Activated CD4-positive, alpha-beta memory T cell treated with anti-CD3 and anti-CD28 coated beads for 36 hours (primary cell): ENCODE measurements at regions of chr17 and their contacts with region 1.

Region 1: DNA sequence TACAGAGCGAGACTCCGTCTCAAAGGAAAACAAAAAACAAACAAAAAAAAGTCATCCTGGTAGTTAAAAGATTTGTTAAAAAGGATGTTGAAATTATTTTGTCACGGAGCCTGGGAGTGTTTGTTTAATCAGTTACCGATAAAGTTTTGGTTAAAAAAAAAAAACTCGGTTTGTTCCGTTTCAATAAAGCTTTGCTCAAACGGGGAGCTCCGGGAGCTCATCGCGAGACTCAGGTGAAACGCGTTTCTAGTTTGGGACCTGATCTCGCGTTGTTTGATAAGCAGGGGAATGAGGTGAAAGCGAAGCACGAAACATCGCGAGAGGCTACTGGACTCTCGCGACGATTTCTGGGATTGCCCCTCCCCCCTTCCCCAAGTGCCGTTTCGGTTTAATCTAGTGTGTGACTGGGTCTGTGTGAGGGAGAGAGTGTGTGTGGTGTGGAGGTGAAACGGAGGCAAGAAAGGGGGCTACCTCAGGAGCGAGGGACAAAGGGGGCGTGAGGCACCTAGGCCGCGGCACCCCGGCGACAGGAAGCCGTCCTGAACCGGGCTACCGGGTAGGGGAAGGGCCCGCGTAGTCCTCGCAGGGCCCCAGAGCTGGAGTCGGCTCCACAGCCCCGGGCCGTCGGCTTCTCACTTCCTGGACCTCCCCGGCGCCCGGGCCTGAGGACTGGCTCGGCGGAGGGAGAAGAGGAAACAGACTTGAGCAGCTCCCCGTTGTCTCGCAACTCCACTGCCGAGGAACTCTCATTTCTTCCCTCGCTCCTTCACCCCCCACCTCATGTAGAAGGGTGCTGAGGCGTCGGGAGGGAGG is at the start of gene CDK12:
- DNase-seq: peak; percentile 98
- H3K4me3 Mint-ChIP-seq: peak within 1 kb of the TSS; percentile 88
- H3K27ac Mint-ChIP-seq: peak within 1 kb of the TSS; percentile 95
- H3K4me1 Mint-ChIP-seq: peaks cover 22% of the 10 kb centered on the region
- H3K27me3 Mint-ChIP-seq: no peaks in the 10 kb centered on the region
- total RNA-seq, gene CDK12: 55.8 to 57.4 TPM

Region 2: GRCh38 chr17:39318636-39319035 is 142.7 kb before region 1 on chr17:
- CTCF ChIA-PET with region 1: no interaction called
- POLR2A ChIA-PET with region 1: no interaction called
- intact Hi-C with region 1: no loop called
- DNase-seq: no peak
- H3K4me3 Mint-ChIP-seq: no peak overlapping the region
- H3K27ac Mint-ChIP-seq: no peak overlapping the region
- H3K4me1 Mint-ChIP-seq: no peaks in the 10 kb centered on the region
- H3K27me3 Mint-ChIP-seq: no peaks in the 10 kb centered on the region

Region 3: DNA sequence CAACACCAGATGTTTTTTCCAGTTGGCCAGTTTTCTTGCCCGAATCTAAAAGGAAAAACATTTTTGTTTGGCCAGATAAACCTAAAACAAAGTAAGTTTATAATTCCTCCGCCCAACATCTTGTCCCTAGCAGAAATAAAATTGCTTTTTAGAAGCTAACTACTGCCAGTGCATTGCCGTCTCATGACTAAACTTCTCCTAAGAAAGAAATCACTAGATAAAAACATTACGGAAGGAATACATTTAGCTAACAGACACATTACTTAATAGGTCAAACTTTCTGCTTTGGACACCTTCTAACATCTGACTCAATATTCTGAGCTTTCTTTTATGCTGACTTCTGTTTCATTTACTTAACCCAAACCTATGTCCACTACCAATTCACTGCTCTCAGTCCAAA is 96.1 kb before region 1 on chr17:
- CTCF ChIA-PET with region 1: no interaction called
- POLR2A ChIA-PET with region 1: no interaction called
- intact Hi-C with region 1: no loop called
- DNase-seq: no peak
- H3K4me3 Mint-ChIP-seq: no peak overlapping the region
- H3K27ac Mint-ChIP-seq: no peak overlapping the region
- H3K4me1 Mint-ChIP-seq: peaks cover 4% of the 10 kb centered on the region
- H3K27me3 Mint-ChIP-seq: no peaks in the 10 kb centered on the region

Region 4: GRCh38 chr17:39450847-39451581 is 10.3 kb before region 1 on chr17 and contains the start of gene MED1:
- CTCF ChIA-PET with region 1: interaction called, 14 read pairs
- POLR2A ChIA-PET with region 1: interaction called, 85 read pairs
- intact Hi-C with region 1: loop called (anchors 1 kb)
- DNase-seq: peak; percentile 96
- H3K4me3 Mint-ChIP-seq: peak within 1 kb of the TSS; percentile 96
- H3K27ac Mint-ChIP-seq: peak within 1 kb of the TSS; percentile 96
- H3K4me1 Mint-ChIP-seq: peaks cover 26% of the 10 kb centered on the region
- H3K27me3 Mint-ChIP-seq: no peaks in the 10 kb centered on the region
- total RNA-seq, gene MED1: 58.9 to 59.7 TPM

Region 5: GRCh38 chr17:39927101-39927928 is 466.0 kb after region 1 on chr17 and contains the starts of genes LRRC3C and ORMDL3:
- CTCF ChIA-PET with region 1: no interaction called
- POLR2A ChIA-PET with region 1: no interaction called
- intact Hi-C with region 1: loop called (anchors 10 kb)
- DNase-seq: peak; percentile 95
- H3K4me3 Mint-ChIP-seq: peak within 1 kb of the TSS; percentile 85
- H3K27ac Mint-ChIP-seq: peak within 1 kb of the TSS; percentile 90
- H3K4me1 Mint-ChIP-seq: peaks cover 52% of the 10 kb centered on the region
- H3K27me3 Mint-ChIP-seq: no peaks in the 10 kb centered on the region
- total RNA-seq, gene LRRC3C: not detected
- total RNA-seq, gene ORMDL3: 53.7 to 58.3 TPM